ENCODE measurements at regions of chr13 and their contacts with region 1.

Region 1: GRCh38 chr13:79782541-79783205 is 301.7 kb downstream of the NDFIP2 start:
- DNase-seq: peak; percentile 83

Region 2: DNA sequence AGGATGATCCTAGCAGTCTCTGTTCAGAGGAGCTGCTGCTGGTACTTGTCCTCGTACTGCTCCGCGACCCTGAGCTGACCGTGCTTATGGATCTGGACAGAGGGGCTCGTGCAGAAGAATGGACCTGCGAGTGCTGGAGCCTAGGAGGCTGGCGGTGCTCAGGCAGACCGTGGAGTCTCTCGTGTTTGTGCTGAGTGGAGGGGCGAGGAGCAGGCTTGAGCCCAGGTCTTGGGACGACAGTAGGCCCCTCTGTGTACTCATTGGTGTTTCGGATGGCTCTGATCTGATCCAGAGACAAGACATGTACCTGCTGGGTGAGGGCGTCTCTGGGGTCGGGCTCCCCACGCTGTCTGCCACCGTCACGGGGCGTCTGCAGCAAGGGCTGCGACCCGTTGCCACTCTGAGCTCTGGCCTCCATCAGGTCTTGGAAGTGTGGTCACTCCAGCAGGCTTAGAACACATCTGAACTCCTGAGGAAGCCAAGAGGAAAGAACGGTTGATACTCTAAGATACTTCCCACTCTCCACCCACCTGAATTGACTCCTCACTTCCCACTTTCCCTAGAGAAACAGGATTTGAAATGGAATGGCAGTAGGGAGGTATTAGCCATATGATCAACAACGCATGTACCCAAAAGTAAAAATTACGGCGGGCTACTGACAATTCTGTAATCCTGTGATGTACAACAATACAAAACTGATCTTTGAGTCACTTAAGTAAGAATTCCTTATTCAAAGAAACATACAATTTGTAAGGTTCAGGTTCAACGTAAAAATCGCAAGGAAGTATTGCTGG is 554.8 kb after region 1 on chr13:
- intact Hi-C with region 1: loop called (anchors 2 kb)
- DNase-seq: no peak